CD8-positive, alpha-beta memory T cell (primary cell): ENCODE measurements at regions of chr18 and their contacts with region 1.

Region 1: DNA sequence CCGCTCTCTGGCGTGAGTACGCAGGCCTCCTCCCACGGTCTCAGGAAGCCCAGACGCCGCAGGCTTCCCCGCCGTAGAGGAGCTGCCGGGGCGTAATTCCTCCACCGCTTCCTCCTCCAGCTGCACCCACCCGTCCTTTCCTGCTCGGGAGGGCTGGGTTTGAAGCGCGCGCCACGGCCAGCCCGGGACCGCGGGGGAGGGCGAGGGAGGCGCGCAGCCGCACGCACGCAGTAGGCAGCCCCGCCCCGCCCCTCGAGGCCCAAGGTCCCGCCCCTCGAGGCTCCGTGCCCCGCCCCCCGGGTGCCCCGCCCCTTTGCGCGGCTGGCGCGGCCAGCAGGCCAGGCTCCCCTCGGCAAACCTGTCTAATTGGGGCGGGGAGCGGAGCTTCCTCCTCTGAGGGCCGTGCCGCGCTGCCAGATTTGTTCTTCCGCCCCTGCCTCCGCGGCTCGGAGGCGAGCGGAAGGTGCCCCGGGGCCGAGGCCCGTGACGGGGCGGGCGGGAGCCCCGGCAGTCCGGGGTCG is at the start of gene MALT1:
- DNase-seq: peak; percentile 92 to 96 (median 93)
- H3K4me3 ChIP-seq: peak within 1 kb of the TSS; percentile 71
- H3K4me3 Mint-ChIP-seq: peak within 1 kb of the TSS; percentile 91 to 96 (median 96)
- H3K27ac ChIP-seq: peak within 1 kb of the TSS; percentile 80
- H3K27ac Mint-ChIP-seq: peak within 1 kb of the TSS; percentile 92 to 97 (median 94)
- H3K4me1 ChIP-seq: peaks cover 41% of the 10 kb centered on the region
- H3K4me1 Mint-ChIP-seq: peaks cover 41 to 62% (median 59%) of the 10 kb centered on the region in 3 donors
- H3K27me3 ChIP-seq: no peaks in the 10 kb centered on the region
- H3K27me3 Mint-ChIP-seq: no peaks in the 10 kb centered on the region
- total RNA-seq, gene MALT1: 33.1 to 35.8 TPM

Region 2: DNA sequence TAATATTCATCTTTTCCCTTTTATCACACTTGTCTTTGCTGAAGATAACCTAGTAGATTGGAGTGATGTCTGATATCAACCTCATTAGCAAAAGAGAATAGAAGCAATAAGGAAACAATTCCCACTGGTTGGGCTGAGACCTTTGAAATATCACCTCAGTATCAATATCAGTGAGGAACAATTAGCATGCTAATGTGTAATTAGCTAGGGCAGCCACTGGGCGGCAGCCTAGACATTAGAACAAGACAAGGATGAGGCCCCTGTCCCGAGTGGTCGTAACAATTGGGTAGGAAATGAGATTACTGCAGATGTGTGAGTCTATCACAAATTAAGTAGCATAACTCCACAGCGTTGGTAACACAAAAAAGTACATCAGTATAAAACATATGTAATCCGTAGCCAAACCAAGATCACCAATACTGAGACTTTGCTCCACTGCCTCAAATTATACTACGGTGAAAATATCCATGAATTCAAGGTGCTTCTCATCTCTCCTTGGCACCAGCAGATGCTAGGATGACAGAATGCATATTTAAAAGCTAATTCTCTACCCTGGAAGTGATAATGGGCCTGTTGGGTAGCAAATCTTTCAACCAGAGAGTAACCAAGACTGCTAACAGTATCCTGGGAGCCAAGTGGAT is 141.3 kb before region 1 on chr18:
- CTCF ChIA-PET with region 1: interaction called, 17 read pairs
- POLR2A ChIA-PET with region 1: interaction called, 5 read pairs
- DNase-seq: peak; percentile 52 to 80 (median 57)
- H3K4me3 ChIP-seq: no peak overlapping the region
- H3K4me3 Mint-ChIP-seq: no peak overlapping the region
- H3K27ac ChIP-seq: no peak overlapping the region
- H3K27ac Mint-ChIP-seq: no peak overlapping the region
- H3K4me1 ChIP-seq: no peaks in the 10 kb centered on the region
- H3K4me1 Mint-ChIP-seq: peaks cover 2 to 5% (median 4%) of the 10 kb centered on the region in 3 donors
- H3K27me3 ChIP-seq: no peaks in the 10 kb centered on the region
- H3K27me3 Mint-ChIP-seq: peaks cover 12 to 21% of the 10 kb centered on the region in 2 donors

Region 3: GRCh38 chr18:58615140-58616132 is 55.7 kb before region 1 on chr18:
- CTCF ChIA-PET with region 1: interaction called, 3 read pairs
- POLR2A ChIA-PET with region 1: interaction called, 11 read pairs
- DNase-seq: peak; percentile 14 to 74 (median 33)
- H3K4me3 ChIP-seq: peak overlapping the region; percentile 51
- H3K4me3 Mint-ChIP-seq: peak overlapping the region; percentile 63 to 86 (median 79)
- H3K27ac ChIP-seq: peak overlapping the region; percentile 52
- H3K27ac Mint-ChIP-seq: peak overlapping the region; percentile 88 to 99 (median 98)
- H3K4me1 ChIP-seq: peaks cover 43% of the 10 kb centered on the region
- H3K4me1 Mint-ChIP-seq: peaks cover 31 to 48% (median 44%) of the 10 kb centered on the region in 3 donors
- H3K27me3 ChIP-seq: no peaks in the 10 kb centered on the region
- H3K27me3 Mint-ChIP-seq: no peaks in the 10 kb centered on the region

Region 4: DNA sequence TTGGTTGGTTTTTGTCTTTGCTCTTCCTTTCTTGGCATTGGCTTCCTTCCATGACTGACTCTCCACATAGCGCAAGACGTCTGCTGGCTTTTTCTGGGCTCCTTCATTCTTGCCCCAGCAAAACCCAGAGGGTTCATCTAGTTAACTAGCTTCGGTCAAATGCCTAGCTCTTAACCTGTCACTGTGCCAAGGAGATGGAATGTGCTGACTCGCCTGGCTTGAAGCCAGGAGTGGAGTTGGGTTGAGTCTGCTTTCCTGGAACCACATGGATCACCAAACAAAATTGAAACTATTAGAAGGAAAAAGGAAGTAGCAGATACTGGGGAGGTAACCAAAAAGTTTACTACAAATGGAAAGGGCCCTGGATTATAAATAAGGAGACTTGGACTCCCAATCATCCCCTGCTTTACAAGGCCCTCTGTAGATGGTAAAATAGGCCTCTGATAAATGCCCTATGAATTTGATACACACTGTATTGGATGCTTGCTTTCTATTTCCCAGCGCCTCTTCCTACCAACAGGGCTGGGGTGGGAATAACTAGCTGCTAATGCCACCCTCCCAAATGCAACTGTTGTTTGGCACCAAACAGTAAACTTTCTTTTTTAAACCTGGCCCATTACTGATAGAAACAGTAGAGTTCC is 11.4 kb after region 1 on chr18:
- CTCF ChIA-PET with region 1: interaction called, 35 read pairs
- POLR2A ChIA-PET with region 1: interaction called, 35 read pairs
- DNase-seq: no peak
- H3K4me3 ChIP-seq: no peak overlapping the region
- H3K4me3 Mint-ChIP-seq: no peak overlapping the region
- H3K27ac ChIP-seq: no peak overlapping the region
- H3K27ac Mint-ChIP-seq: peak overlapping the region in 7 of 8 donors; percentile 3 to 80 (median 44)
- H3K4me1 ChIP-seq: peaks cover 35% of the 10 kb centered on the region
- H3K4me1 Mint-ChIP-seq: peaks cover 61 to 87% (median 81%) of the 10 kb centered on the region in 3 donors
- H3K27me3 ChIP-seq: no peaks in the 10 kb centered on the region
- H3K27me3 Mint-ChIP-seq: peaks cover 0 to 3% of the 10 kb centered on the region in 2 donors

Region 5: DNA sequence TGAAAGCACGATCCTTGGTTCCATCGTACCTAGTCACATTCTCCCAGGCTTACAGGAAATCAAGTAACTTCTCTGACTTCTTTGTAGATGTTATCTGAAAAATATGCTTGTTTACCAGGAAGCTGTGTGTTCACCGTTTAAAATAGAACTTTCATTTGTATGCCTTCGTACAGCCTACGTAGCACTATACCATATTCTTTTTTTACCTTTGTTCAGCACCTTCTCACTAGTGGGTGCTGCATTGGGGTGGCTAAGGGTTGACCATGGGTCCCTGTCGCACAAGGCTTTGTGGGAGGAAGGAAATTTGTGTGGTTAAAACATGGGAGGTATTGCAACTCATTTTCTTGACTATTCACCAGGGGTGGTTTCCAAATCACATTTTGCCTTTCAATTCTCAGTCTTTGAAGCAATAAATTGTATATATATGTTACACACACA is 16.7 kb after region 1 on chr18:
- CTCF ChIA-PET with region 1: interaction called, 35 read pairs
- POLR2A ChIA-PET with region 1: interaction called, 35 read pairs
- DNase-seq: peak; percentile 20 to 84 (median 79)
- H3K4me3 ChIP-seq: no peak overlapping the region
- H3K4me3 Mint-ChIP-seq: peak overlapping the region; percentile 43 to 86 (median 82)
- H3K27ac ChIP-seq: no peak overlapping the region
- H3K27ac Mint-ChIP-seq: peak overlapping the region; percentile 64 to 98 (median 94)
- H3K4me1 ChIP-seq: peaks cover 70% of the 10 kb centered on the region
- H3K4me1 Mint-ChIP-seq: peaks cover 59 to 83% (median 80%) of the 10 kb centered on the region in 3 donors
- H3K27me3 ChIP-seq: no peaks in the 10 kb centered on the region
- H3K27me3 Mint-ChIP-seq: no peaks in the 10 kb centered on the region

Region 6: DNA sequence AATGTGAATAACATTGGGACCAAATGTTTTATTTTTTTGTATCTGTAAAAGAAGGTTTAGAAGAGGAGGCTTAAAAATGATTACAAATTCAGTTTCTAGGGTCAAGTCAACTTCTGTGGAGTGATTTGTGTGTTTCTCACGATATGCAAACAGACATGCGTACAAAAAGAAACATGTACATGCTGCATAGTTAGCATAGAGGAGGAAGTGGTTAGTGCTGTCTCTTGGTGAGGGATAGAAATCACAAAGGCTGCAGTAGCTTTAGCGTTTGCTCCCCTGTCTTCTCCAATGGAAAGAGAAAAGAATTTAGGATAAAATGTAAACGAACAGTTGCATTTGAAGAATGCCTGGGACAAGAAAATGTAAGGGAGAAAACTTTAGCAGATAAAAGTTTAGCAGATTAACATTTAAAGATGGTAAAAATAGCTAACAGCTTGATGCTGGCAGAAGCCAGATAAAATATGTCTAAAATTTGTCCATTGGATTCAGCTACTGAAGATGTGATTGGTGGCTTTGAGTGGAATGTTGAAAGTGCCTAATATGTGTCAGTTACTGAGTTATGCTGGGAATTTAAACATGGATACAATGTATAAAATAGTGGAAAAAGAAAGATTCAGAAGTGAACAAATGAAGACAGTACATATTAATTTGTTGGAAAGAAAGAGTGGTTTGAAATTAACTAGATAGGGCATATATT is 45.0 kb after region 1 on chr18:
- CTCF ChIA-PET with region 1: interaction called, 5 read pairs
- POLR2A ChIA-PET with region 1: interaction called, 14 read pairs
- DNase-seq: peak in 2 of 5 donors; percentile 17 to 37
- H3K4me3 ChIP-seq: peak overlapping the region; percentile 5
- H3K4me3 Mint-ChIP-seq: peak overlapping the region; percentile 0 to 80 (median 60)
- H3K27ac ChIP-seq: no peak overlapping the region
- H3K27ac Mint-ChIP-seq: peak overlapping the region; percentile 3 to 93 (median 80)
- H3K4me1 ChIP-seq: peaks cover 42% of the 10 kb centered on the region
- H3K4me1 Mint-ChIP-seq: peaks cover 42 to 69% (median 61%) of the 10 kb centered on the region in 3 donors
- H3K27me3 ChIP-seq: no peaks in the 10 kb centered on the region
- H3K27me3 Mint-ChIP-seq: no peaks in the 10 kb centered on the region

Region 7: DNA sequence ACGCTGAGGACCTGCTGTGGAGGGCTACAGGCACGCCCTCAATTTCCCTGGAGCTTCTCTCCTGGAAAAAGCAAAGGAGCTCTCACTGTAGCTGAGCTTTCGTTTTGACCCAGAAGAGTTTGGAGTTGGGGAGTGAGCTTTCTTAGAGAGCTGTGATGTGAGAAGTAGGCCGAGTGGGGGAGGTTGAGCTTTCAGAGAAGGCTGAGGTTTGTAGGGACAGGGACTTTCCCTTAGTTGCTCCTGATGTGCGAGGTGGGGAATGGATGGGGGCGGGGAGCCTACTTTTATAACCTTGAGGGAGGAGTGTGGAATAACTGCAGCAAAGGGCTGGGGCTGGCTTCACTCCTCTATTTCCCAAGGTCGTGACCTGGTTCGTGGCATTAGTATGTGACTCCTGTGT is 240.6 kb after region 1 on chr18:
- CTCF ChIA-PET with region 1: no interaction called
- POLR2A ChIA-PET with region 1: no interaction called
- DNase-seq: no peak
- H3K4me3 ChIP-seq: no peak overlapping the region
- H3K4me3 Mint-ChIP-seq: no peak overlapping the region
- H3K27ac ChIP-seq: no peak overlapping the region
- H3K27ac Mint-ChIP-seq: peak overlapping the region in 2 of 8 donors; percentile 1 to 74
- H3K4me1 ChIP-seq: no peaks in the 10 kb centered on the region
- H3K4me1 Mint-ChIP-seq: peaks cover 0 to 15% (median 3%) of the 10 kb centered on the region in 3 donors
- H3K27me3 ChIP-seq: no peaks in the 10 kb centered on the region
- H3K27me3 Mint-ChIP-seq: peaks cover 18 to 20% of the 10 kb centered on the region in 2 donors